ENCODE measurements at regions of chr2 and their contacts with region 1.

Region 1: GRCh38 chr2:48471048-48471474 is 58.9 kb upstream of the STON1 start:
- DNase-seq: peak in 1 of 5 donors; percentile 32
- H3K4me3 ChIP-seq: no peak overlapping the region
- H3K27ac ChIP-seq: peak overlapping the region in 1 of 2 donors; percentile 55
- H3K4me1 ChIP-seq: peaks cover 5% of the 10 kb centered on the region
- H3K27me3 ChIP-seq: peaks cover 2% of the 10 kb centered on the region
- CTCF ChIP-seq: peak; percentile 57 to 87 (median 86)
- EP300 ChIP-seq: no peak
- POLR2A ChIP-seq: no peak

Region 2: GRCh38 chr2:48508461-48509124 is 37.5 kb after region 1 on chr2:
- intact Hi-C with region 1: no loop called
- DNase-seq: peak in 1 of 5 donors; percentile 39
- H3K4me3 ChIP-seq: no peak overlapping the region
- H3K27ac ChIP-seq: peak overlapping the region in 1 of 2 donors; percentile 50
- H3K4me1 ChIP-seq: peaks cover 6% of the 10 kb centered on the region
- H3K27me3 ChIP-seq: no peaks in the 10 kb centered on the region
- CTCF ChIP-seq: no peak
- EP300 ChIP-seq: no peak
- POLR2A ChIP-seq: no peak

Region 3: GRCh38 chr2:48529676-48530032 is 58.6 kb after region 1 on chr2:
- intact Hi-C with region 1: loop called in 2 of 4 experiments (anchors 5 to 10 kb)
- DNase-seq: peak in 4 of 5 donors; percentile 25 to 55 (median 50)
- H3K4me3 ChIP-seq: peak overlapping the region; percentile 97
- H3K27ac ChIP-seq: peak overlapping the region; percentile 89 to 96
- H3K4me1 ChIP-seq: peaks cover 12% of the 10 kb centered on the region
- H3K27me3 ChIP-seq: no peaks in the 10 kb centered on the region
- CTCF ChIP-seq: no peak
- EP300 ChIP-seq: no peak
- POLR2A ChIP-seq: no peak

Region 4: DNA sequence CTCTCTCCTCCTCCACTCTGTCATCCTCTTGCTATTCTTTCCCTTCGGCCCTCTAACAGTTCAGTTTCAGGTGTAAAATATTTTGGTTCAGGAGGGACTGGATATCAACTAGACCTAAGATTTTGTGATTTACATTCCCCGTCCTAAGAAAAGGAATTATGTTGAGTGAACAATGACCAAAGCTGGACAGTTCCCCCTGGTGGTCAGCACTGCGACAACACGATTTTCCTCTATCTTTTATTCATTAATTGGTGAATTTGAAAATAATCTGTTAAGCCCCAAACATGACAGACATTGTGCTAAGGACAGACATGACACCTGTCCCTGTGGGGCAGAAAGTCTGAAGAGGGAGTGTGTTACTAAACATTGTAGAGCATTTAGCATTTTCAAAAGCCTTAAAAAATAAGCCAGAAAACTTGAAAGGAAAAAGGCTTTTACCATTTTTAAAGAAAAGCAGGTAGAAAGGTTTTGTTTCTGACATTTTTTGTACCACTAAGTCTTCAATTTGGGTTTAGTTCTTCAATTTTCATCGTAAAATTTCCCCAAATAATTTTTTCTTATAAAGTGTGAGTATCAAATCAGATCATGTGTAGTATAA is 118.2 kb after region 1 on chr2:
- intact Hi-C with region 1: loop called in 1 of 4 experiments (anchors 5 kb)
- DNase-seq: peak; percentile 20 to 58 (median 47)
- H3K4me3 ChIP-seq: no peak overlapping the region
- H3K27ac ChIP-seq: no peak overlapping the region
- H3K4me1 ChIP-seq: no peaks in the 10 kb centered on the region
- H3K27me3 ChIP-seq: no peaks in the 10 kb centered on the region
- CTCF ChIP-seq: peak; percentile 48 to 75 (median 65)
- EP300 ChIP-seq: no peak
- POLR2A ChIP-seq: no peak